Common myeloid progenitor, CD34-positive (primary cell): ENCODE measurements at regions of chr10 and their contacts with region 1.

Region 1: DNA sequence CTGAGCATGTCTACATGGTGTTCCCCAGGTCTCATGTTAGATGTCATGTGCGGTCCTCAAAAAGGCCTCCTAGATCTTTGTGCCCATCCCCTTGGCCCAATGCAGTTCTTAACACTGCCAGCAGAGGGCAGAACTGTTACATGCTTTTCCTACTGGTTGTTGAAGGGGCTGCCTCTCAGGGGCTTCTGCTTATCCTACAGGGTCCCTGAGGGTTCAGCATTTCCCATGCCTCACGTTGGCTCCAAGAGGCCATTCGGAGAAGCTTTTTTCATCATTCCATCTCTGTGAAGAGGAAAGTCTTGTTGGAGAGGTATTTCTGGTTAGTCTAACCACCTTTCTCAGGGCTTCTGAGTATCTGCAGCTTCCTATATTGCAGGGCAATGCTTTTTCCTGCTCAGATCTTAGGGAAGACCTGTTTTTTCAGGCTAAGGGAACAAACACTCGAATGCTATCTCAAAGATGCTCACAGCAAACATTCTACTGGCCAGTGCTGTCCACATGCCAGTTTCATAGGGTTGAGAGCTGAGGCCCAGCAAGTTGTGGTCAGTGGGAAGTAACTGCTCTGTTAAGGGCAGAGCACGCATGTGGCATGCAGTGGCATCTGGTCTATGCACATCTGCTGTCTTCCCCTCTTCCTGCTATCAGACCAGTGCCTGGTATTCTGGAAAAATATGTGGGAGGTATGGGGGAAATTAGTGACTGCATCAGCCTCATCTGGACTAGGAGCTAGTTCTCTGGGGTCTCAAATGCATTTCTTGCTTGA is 31.5 kb downstream of the MBL2 start:
- DNase-seq: peak; percentile 68 to 84 (median 78)
- H3K4me3 ChIP-seq: no peak overlapping the region
- H3K27ac ChIP-seq: no peak overlapping the region
- H3K4me1 ChIP-seq: peaks cover 0 to 19% (median 7%) of the 10 kb centered on the region in 4 experiments
- H3K27me3 ChIP-seq: no peaks in the 10 kb centered on the region

Region 2: DNA sequence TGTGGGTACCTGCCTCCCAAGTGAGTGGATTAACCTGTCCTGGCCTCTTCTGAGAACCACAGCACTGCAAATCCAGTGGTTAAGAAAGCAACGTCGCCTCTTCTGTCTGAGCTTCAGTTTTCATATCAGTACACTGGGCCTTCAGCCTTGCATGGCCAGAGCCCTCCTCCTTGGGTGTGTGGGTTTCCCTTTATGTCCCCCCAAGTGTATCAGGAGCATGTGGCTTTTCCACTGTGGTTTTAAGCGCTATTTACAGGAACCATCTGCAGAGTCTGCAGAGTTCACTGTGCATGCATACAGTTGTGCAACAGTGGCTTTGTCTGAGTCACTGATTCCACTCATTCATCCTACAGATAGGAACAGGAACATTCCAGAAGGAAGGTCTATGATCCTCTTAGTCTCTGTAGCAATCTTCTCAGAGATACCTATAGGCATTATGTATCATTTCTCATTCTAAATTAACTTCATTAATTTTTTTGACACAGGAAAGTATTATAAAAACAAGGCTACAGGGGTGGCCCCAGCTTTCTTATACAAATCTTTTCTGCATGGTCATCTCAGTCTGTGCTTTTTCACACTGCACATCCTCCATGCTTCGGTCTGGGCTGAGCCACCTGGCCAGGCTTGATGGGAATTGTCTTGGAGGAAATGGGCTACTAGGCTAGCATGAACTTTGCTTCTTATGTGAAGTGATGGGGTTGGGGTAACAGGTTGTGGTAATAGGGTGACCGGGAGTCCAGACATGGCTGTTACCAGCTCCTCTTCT is 14.4 kb after region 1 on chr10:
- CTCF ChIA-PET with region 1: interaction called, 31 read pairs
- POLR2A ChIA-PET with region 1: no interaction called
- DNase-seq: peak; percentile 90 to 99 (median 98)
- H3K4me3 ChIP-seq: peak overlapping the region in 6 of 7 experiments; percentile 48 to 79 (median 68)
- H3K27ac ChIP-seq: peak overlapping the region; percentile 69 to 70
- H3K4me1 ChIP-seq: peaks cover 30 to 79% (median 52%) of the 10 kb centered on the region in 4 experiments
- H3K27me3 ChIP-seq: no peaks in the 10 kb centered on the region

Region 3: GRCh38 chr10:52785418-52785817 is 44.3 kb after region 1 on chr10:
- CTCF ChIA-PET with region 1: interaction called, 433 read pairs
- POLR2A ChIA-PET with region 1: no interaction called
- DNase-seq: no peak
- H3K4me3 ChIP-seq: no peak overlapping the region
- H3K27ac ChIP-seq: no peak overlapping the region
- H3K4me1 ChIP-seq: no peaks in the 10 kb centered on the region
- H3K27me3 ChIP-seq: peaks cover 0 to 2% (median 0%) of the 10 kb centered on the region in 5 experiments